ENCODE measurements at regions of chr1 and their contacts with region 1.

Region 1: DNA sequence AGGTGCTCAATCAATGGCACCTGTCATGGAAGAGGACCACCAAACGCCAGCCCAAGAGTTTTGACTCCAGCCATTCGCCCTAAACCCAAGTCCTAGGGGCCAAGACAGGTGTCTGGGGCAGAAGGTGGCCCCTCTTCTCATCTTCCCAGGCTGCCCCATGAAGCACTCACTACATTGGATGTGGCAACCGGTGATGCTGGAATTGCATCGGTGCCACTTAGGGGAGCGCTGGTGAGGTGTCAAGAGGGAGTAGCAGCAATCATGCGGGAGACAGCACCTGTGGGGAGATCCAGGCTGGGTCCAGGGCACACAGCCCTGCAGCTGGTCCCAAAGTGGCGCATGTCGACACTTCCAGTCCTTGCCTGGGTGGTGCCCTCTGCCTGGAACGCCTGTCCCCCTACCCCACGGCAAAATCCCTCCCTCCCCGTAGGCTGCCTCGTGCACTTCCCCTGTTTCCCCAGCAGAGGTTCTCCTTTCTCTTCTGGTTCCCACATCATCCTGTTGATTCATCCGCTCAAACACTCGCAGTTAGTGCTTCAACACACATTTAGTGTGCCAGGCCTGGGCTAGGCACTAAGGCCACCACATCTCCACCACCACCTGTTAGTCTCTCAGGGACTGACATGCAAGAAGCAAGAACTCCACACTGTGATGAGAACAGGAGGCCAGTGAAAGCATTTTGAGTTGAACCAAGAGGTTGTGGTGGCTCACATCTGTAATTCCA is 18.5 kb downstream of the PLA2G2D start:
- DNase-seq: no peak

Region 2: GRCh38 chr1:19974822-19975416 is 125.9 kb before region 1 on chr1:
- intact Hi-C with region 1: loop called (anchors 1 kb)
- DNase-seq: no peak

Region 3: GRCh38 chr1:20151906-20152598 is 51.3 kb after region 1 on chr1:
- intact Hi-C with region 1: loop called (anchors 2 kb)
- DNase-seq: peak; percentile 89

Region 4: DNA sequence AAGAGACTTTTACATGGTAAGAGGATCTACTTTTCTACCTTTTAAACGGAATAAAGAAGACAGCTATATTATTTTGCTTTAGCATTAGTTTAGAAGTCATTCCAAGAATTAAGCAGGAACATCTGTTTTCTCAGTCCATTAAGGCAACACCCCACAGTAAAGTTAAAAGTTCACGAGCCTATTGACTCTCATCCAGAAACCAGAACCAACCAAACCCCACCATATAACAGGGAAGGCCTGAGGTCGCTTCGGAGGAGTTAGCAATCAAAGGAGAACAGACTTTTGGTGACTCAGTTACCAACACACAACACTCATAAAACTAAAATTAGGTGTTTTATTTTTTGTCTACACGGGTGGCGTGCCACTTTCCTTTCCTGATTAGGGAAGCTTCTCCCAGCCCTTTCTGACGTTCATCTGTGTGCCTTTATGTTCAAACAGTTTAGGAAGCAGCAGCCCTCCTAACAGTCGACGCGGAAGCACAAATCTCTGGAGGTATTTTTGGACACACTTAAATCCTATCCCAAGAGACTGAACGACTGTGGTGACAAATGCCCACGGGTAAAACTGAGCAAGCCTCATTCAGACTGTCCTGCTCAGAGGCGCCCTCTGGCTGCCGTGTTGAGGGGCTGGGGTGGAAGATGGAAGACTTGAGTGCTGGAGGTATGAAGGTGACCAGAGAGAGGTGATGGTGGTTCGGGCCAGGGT is 94.1 kb after region 1 on chr1:
- intact Hi-C with region 1: loop called (anchors 2 kb)
- DNase-seq: peak; percentile 81